ENCODE measurements at regions of chr5 and their contacts with region 1.

Region 1: DNA sequence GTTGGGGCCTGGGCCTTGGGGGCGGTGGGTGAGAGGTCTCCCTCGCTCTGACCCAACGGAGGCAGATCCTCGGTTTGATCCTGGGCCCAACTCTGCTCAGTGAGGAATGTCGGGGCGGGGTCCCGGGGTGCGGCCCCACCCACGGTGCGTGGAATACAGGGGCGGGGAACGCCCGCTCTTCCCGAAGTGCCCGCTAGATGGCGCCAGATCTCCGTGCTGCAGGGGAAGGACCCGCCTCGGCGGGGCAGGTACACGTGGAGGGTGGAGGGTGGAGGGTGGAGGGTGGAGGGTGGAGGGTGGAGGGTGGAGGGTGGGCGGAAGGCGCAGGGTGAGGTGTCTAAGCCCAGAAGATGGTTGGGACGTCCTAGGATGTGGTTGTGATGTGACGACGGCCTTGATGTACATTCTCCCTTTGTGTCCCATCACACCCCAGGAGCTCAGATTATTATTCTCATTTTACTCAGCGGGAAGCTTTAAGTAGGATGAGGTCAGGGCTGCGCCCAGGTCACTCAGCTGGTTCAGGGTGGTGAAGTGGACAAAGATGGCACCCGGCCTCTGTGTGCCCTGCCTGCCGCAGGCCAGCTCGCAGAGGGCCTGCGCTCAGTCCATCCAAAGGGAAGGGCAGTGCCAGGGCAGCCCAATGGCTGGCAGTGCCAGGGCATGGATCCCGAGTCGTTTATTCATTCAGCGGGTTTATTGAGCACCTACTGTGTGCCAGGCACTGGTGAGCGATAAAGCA is 9.4 kb upstream of the RPS14 start:
- DNase-seq: peak; percentile 90
- ATAC-seq: peak; percentile 90

Region 2: GRCh38 chr5:150479416-150479815 is 20.4 kb after region 1 on chr5:
- intact Hi-C with region 1: no loop called
- DNase-seq: no peak
- ATAC-seq: no peak

Region 3: DNA sequence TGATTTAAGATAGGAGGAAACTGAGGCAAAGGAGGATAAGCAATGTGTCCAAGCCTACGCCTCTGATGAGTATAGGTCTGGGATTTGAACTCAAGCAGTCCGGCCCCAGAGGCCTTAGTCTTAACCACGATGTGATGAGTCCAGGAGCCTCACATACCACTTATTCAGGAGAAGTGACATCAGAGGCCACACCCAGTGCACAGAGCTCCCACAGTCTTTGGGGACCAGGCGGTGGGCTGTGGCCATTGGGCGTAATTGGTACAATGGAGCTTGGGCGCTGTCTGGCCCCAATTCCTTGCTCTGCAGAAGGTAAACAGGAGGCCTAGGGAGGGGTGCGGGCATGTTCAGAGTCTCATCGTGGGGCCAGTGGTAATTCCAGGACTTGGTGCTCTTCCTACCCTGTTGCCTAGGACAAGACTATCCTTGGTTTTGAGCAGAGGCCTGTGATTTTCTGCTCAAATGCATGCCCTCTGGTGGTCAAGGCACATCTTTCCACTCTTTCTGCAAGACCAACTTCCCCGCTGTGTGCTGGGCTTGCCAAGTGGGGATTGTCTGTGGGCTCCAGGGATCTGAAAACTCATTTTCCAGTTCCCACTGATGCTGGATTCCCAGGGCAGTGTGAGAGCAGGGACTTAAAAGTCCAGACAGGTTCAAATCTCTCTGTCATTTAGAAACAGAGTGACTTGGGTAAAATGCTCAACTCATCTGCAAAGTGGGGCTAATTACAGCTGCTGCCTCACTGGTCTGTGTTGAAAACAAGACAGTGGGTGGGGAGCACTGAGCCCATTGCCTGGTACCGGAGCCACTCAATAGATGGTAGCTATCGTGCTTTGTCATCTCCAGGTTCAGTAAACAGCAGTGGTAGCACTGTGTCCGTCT is 64.7 kb after region 1 on chr5:
- intact Hi-C with region 1: loop called (anchors 2 kb)
- DNase-seq: no peak
- ATAC-seq: peak; percentile 43

Region 4: DNA sequence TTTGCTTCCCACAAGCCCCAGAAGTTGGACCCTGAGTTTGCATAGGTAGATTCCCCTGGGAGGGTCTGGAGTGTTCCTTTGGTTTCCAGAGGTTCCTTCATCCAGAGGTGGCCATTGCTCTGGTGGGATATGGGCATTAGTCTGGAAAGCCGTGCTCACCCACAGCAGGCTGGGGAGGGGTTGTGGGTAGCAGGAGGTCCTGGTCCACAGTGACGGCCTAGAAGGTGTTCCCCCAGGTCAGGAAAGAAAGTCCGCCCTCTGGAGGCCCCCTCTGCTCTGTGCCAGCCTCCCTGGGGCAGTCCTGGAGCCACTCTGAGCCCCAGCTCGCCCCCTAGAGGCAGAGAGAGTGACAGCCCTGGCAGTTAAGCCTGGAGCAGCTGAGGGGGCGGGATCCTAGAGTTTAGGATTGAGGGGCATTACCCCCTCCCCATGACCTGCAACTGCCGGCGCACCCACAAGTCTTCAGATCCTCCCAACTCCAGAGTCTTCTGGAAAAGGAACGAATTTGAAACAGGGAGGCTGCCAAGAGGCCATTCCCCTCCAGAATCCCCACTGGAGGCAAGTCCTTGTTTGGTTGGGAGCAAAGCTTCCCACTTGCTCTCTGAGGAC is 85.7 kb after region 1 on chr5:
- intact Hi-C with region 1: loop called (anchors 1 kb)
- DNase-seq: peak; percentile 87
- ATAC-seq: peak; percentile 75

Region 5: DNA sequence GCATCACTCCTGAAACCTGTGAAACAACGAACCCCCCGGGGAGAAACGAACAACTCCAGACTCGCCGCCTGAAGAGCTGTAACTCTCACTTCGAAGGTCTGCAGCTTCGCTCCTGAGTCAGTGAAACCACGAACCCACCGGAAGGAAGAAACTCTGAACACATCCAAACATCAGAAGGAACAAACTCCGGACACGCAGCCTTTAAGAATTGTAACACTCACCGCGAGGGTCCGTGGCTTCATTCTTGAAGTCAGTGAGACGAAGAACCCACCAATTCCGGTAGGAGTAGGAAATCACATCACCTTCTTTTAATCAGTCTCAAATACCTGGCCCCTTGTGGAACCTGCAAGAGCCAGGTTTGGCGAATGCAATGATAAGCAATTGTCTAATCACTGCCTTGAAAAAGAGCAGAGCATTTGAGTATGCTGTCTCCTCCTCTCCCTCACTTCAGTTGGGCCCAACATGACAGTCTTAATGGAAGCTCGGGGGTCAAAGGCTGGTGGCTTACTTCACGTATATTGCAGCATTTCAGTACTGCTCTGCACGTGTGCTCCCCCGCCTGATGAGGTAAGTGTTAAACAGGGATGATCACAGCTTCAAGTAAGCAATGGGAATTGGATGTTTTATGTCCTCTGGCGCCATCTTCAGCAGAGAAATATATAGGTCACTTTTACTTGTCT is 387.8 kb after region 1 on chr5:
- intact Hi-C with region 1: loop called (anchors 5 kb)
- DNase-seq: no peak
- ATAC-seq: peak; percentile 84

Region 6: DNA sequence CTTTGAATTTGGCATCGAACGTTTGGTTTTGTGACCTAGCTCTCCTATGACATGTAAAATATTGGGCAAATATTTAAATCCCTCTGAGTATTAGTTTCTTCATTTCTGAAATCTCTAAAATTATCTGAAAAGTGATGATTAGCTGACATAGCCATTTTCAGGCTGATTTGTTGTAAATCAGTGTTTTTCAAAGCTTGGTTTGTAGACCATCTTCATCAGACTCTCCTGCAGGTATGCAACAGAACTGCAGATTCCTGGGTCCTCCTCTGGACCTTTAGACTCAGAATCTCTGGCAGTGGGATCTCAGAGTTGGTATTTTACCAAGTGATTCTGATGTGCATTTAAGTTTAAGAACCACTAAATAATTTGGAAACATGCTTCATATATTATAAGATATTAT is 1984.9 kb after region 1 on chr5:
- intact Hi-C with region 1: no loop called
- DNase-seq: no peak
- ATAC-seq: no peak

Measured in Right ventricle myocardium inferior (tissue), 1 donor.